Activated naive CD8-positive, alpha-beta T cell treated with anti-CD3 and anti-CD28 coated beads, Interleukin-2, amount 10 ng/mL, durations not matched to agents 7 days and 5 days (primary cell): ENCODE measurements at regions of chr10 and their contacts with region 1.

Region 1: GRCh38 chr10:35195361-35196306 is 69.0 kb downstream of the CREM start:
- DNase-seq: peak; percentile 63
- ATAC-seq: peak; percentile 92
- H3K4me3 Mint-ChIP-seq: peak overlapping the region; percentile 87
- H3K27ac Mint-ChIP-seq: peak overlapping the region; percentile 96
- H3K4me1 Mint-ChIP-seq: peaks cover 45% of the 10 kb centered on the region
- H3K27me3 Mint-ChIP-seq: no peaks in the 10 kb centered on the region

Region 2: GRCh38 chr10:35136263-35136815 is 59.3 kb before region 1 on chr10:
- POLR2A ChIA-PET with region 1: interaction called, 16 read pairs
- DNase-seq: no peak
- ATAC-seq: peak; percentile 46
- H3K4me3 Mint-ChIP-seq: peak overlapping the region; percentile 63
- H3K27ac Mint-ChIP-seq: peak overlapping the region; percentile 79
- H3K4me1 Mint-ChIP-seq: peaks cover 41% of the 10 kb centered on the region
- H3K27me3 Mint-ChIP-seq: no peaks in the 10 kb centered on the region

Region 3: GRCh38 chr10:35150308-35150707 is 45.3 kb before region 1 on chr10:
- POLR2A ChIA-PET with region 1: interaction called, 25 read pairs
- DNase-seq: no peak
- ATAC-seq: no peak
- H3K4me3 Mint-ChIP-seq: peak overlapping the region; percentile 60
- H3K27ac Mint-ChIP-seq: peak overlapping the region; percentile 85
- H3K4me1 Mint-ChIP-seq: peaks cover 59% of the 10 kb centered on the region
- H3K27me3 Mint-ChIP-seq: no peaks in the 10 kb centered on the region

Region 4: GRCh38 chr10:35208536-35208935 is 12.9 kb after region 1 on chr10:
- POLR2A ChIA-PET with region 1: interaction called, 99 read pairs
- DNase-seq: peak; percentile 60
- ATAC-seq: peak; percentile 94
- H3K4me3 Mint-ChIP-seq: peak overlapping the region; percentile 81
- H3K27ac Mint-ChIP-seq: peak overlapping the region; percentile 94
- H3K4me1 Mint-ChIP-seq: peaks cover 56% of the 10 kb centered on the region
- H3K27me3 Mint-ChIP-seq: no peaks in the 10 kb centered on the region

Region 5: GRCh38 chr10:35218339-35218955 is 22.8 kb after region 1 on chr10:
- POLR2A ChIA-PET with region 1: interaction called, 42 read pairs
- DNase-seq: peak; percentile 74
- ATAC-seq: peak; percentile 86
- H3K4me3 Mint-ChIP-seq: peak overlapping the region; percentile 61
- H3K27ac Mint-ChIP-seq: peak overlapping the region; percentile 75
- H3K4me1 Mint-ChIP-seq: peaks cover 29% of the 10 kb centered on the region
- H3K27me3 Mint-ChIP-seq: peaks cover 4% of the 10 kb centered on the region